ENCODE measurements at regions of chr15 and their contacts with region 1.

Region 1: DNA sequence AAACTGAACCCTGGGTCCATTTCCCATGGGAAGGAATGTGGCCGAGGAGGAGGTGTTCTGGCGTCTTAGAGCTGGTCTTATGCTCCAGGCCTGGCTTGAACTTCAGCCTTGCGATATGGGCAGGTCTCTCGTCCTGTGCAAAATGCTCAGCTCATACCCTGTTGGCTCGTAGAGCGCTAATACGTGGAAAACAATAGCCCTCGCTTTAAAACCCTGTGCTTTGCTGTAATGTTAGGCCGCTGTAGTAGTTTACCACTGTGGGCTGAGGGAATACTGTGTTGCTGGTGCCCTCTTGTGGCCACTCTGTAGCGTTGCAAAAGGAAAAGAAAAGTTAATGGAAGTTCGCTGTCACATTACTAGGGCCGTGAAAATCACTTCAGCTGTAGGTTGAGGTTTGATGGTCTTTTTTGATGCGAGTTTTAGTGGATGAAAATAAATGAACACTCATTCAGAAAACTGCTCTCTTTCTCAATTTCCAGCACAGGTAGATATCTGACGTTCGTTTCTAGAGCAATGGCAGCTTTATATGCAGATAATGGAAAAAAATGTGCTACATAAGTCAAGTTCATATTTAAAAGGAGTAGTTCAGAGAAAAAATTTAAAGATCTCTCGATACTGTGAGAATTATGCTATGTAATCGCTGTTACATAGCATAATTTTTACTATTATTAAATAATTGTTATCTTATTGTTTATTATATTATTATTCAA is 92.9 kb downstream of the MCTP2 start:
- DNase-seq: peak; percentile 82
- ATAC-seq: peak; percentile 91
- H3K4me3 ChIP-seq: no peak overlapping the region
- H3K4me3 Mint-ChIP-seq: no peak overlapping the region
- H3K27ac ChIP-seq: no peak overlapping the region
- H3K27ac Mint-ChIP-seq: peak overlapping the region; percentile 67
- H3K4me1 ChIP-seq: peaks cover 3 to 8% of the 10 kb centered on the region in 2 donors
- H3K4me1 Mint-ChIP-seq: peaks cover 22% of the 10 kb centered on the region
- H3K27me3 ChIP-seq: no peaks in the 10 kb centered on the region
- H3K27me3 Mint-ChIP-seq: no peaks in the 10 kb centered on the region
- CTCF ChIP-seq: peak; percentile 92

Region 2: DNA sequence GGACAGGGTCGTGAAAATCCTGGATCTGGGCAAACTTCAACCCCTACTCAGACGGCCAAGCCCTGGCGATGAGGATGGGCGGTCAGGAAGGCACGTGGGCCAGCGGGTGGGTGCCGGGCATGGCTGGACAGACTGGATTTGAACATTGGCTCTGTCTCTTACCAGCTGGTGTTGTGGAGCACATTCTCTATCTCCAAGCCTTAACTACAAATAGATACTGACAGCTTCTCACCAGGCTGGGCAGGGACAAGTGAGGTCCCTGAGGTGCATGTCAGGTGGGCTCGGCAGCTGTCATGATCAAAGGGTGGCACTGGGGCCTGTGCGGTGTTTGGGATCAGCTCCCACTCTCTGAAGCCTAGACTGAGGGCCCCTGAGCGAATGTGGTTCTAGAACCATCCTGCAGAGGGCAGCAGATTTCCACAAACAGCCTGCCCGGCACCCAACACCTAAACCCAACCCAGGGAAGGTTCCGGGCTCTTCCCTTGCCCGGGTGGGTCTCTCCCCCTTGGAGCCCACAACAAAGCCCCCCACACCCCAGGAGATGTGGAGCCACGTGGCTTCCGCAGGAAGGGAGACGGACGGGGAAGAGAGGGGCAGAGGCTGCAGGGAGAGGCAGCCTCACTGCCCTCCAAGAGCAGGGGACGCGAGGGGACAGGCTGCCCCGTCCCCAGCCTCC is 1293.7 kb before region 1 on chr15:
- CTCF ChIA-PET with region 1: no interaction called
- POLR2A ChIA-PET with region 1: no interaction called
- intact Hi-C with region 1: loop called (anchors 5 kb)
- DNase-seq: peak; percentile 72
- ATAC-seq: peak; percentile 82
- H3K4me3 ChIP-seq: no peak overlapping the region
- H3K4me3 Mint-ChIP-seq: no peak overlapping the region
- H3K27ac ChIP-seq: no peak overlapping the region
- H3K27ac Mint-ChIP-seq: peak overlapping the region; percentile 43
- H3K4me1 ChIP-seq: peaks cover under 1 to 10% of the 10 kb centered on the region in 2 donors
- H3K4me1 Mint-ChIP-seq: peaks cover 18% of the 10 kb centered on the region
- H3K27me3 ChIP-seq: no peaks in the 10 kb centered on the region
- H3K27me3 Mint-ChIP-seq: no peaks in the 10 kb centered on the region
- CTCF ChIP-seq: peak; percentile 84

Region 3: GRCh38 chr15:94163999-94164807 is 160.1 kb before region 1 on chr15:
- CTCF ChIA-PET with region 1: interaction called, 511 read pairs
- POLR2A ChIA-PET with region 1: interaction called, 3 read pairs
- intact Hi-C with region 1: loop called (anchors 1 kb)
- DNase-seq: peak; percentile 74
- ATAC-seq: peak; percentile 58
- H3K4me3 ChIP-seq: no peak overlapping the region
- H3K4me3 Mint-ChIP-seq: no peak overlapping the region
- H3K27ac ChIP-seq: no peak overlapping the region
- H3K27ac Mint-ChIP-seq: no peak overlapping the region
- H3K4me1 ChIP-seq: no peaks in the 10 kb centered on the region
- H3K4me1 Mint-ChIP-seq: peaks cover 1% of the 10 kb centered on the region
- H3K27me3 ChIP-seq: peaks cover 0 to 11% (median 0%) of the 10 kb centered on the region in 4 experiments
- H3K27me3 Mint-ChIP-seq: no peaks in the 10 kb centered on the region
- CTCF ChIP-seq: peak; percentile 98

Region 4: GRCh38 chr15:94230956-94231722 is 93.1 kb before region 1 on chr15 and contains the start of gene MCTP2:
- CTCF ChIA-PET with region 1: interaction called, 97 read pairs
- POLR2A ChIA-PET with region 1: interaction called, 3 read pairs
- intact Hi-C with region 1: loop called (anchors 1 kb)
- DNase-seq: peak; percentile 91
- ATAC-seq: peak; percentile 87
- H3K4me3 ChIP-seq: peak within 1 kb of the TSS; percentile 70 to 96 (median 80)
- H3K4me3 Mint-ChIP-seq: peak within 1 kb of the TSS; percentile 95
- H3K27ac ChIP-seq: peak within 1 kb of the TSS; percentile 88 to 90
- H3K27ac Mint-ChIP-seq: peak within 1 kb of the TSS; percentile 93
- H3K4me1 ChIP-seq: peaks cover 53 to 59% of the 10 kb centered on the region in 2 donors
- H3K4me1 Mint-ChIP-seq: peaks cover 68% of the 10 kb centered on the region
- H3K27me3 ChIP-seq: no peaks in the 10 kb centered on the region
- H3K27me3 Mint-ChIP-seq: no peaks in the 10 kb centered on the region
- CTCF ChIP-seq: peak; percentile 24
- total RNA-seq, gene MCTP2: 64.8 and 68.5 TPM in 2 replicates

Region 5: DNA sequence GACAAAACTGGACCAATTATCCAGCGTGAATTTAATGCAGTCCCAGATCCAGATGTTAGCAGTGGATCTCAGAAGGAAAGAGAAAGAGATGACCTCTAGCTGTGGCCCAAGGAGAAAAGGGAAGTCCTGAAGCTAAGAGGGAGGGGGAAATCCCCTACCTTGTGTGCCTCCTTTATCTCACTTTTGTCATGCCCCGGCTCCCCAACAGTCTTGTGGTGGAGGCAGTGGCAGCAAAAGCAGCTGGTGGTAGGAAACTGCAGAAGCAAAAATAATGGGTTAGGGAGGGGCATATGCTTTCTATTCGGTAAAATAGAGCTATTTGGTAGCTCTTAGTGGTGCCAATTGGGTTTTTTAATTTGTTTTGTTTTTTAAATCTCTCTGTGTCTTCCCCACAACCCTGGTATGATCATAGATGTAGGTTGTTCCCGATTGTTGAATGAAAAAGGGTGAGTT is 36.5 kb before region 1 on chr15:
- CTCF ChIA-PET with region 1: interaction called, 67 read pairs
- POLR2A ChIA-PET with region 1: no interaction called
- intact Hi-C with region 1: loop called (anchors 5 kb)
- DNase-seq: peak; percentile 91
- ATAC-seq: peak; percentile 92
- H3K4me3 ChIP-seq: peak overlapping the region; percentile 2 to 56 (median 28)
- H3K4me3 Mint-ChIP-seq: peak overlapping the region; percentile 84
- H3K27ac ChIP-seq: peak overlapping the region; percentile 90 to 93
- H3K27ac Mint-ChIP-seq: peak overlapping the region; percentile 90
- H3K4me1 ChIP-seq: peaks cover 65 to 72% of the 10 kb centered on the region in 2 donors
- H3K4me1 Mint-ChIP-seq: peaks cover 72% of the 10 kb centered on the region
- H3K27me3 ChIP-seq: no peaks in the 10 kb centered on the region
- H3K27me3 Mint-ChIP-seq: no peaks in the 10 kb centered on the region
- CTCF ChIP-seq: no peak

Region 6: GRCh38 chr15:94338243-94338846 is 14.1 kb after region 1 on chr15:
- CTCF ChIA-PET with region 1: interaction called, 58 read pairs
- POLR2A ChIA-PET with region 1: no interaction called
- intact Hi-C with region 1: no loop called
- DNase-seq: no peak
- ATAC-seq: no peak
- H3K4me3 ChIP-seq: no peak overlapping the region
- H3K4me3 Mint-ChIP-seq: no peak overlapping the region
- H3K27ac ChIP-seq: no peak overlapping the region
- H3K27ac Mint-ChIP-seq: no peak overlapping the region
- H3K4me1 ChIP-seq: no peaks in the 10 kb centered on the region
- H3K4me1 Mint-ChIP-seq: no peaks in the 10 kb centered on the region
- H3K27me3 ChIP-seq: no peaks in the 10 kb centered on the region
- H3K27me3 Mint-ChIP-seq: no peaks in the 10 kb centered on the region
- CTCF ChIP-seq: no peak

Region 7: GRCh38 chr15:94692670-94693069 is 368.4 kb after region 1 on chr15:
- CTCF ChIA-PET with region 1: no interaction called
- POLR2A ChIA-PET with region 1: no interaction called
- intact Hi-C with region 1: no loop called
- DNase-seq: no peak
- ATAC-seq: no peak
- H3K4me3 ChIP-seq: no peak overlapping the region
- H3K4me3 Mint-ChIP-seq: no peak overlapping the region
- H3K27ac ChIP-seq: no peak overlapping the region
- H3K27ac Mint-ChIP-seq: no peak overlapping the region
- H3K4me1 ChIP-seq: no peaks in the 10 kb centered on the region
- H3K4me1 Mint-ChIP-seq: no peaks in the 10 kb centered on the region
- H3K27me3 ChIP-seq: no peaks in the 10 kb centered on the region
- H3K27me3 Mint-ChIP-seq: no peaks in the 10 kb centered on the region
- CTCF ChIP-seq: no peak